ENCODE measurements at regions of chr22 and their contacts with region 1.

Region 1: GRCh38 chr22:43273902-43274484 is 69.2 kb downstream of the SCUBE1 start:
- DNase-seq: peak in 4 of 5 donors; percentile 29 to 47 (median 43)
- H3K4me3 ChIP-seq: no peak overlapping the region
- H3K4me3 Mint-ChIP-seq: no peak overlapping the region
- H3K27ac ChIP-seq: no peak overlapping the region
- H3K27ac Mint-ChIP-seq: no peak overlapping the region
- H3K4me1 ChIP-seq: peaks cover 4% of the 10 kb centered on the region
- H3K4me1 Mint-ChIP-seq: peaks cover 0 to 5% (median 4%) of the 10 kb centered on the region in 4 donors
- H3K27me3 ChIP-seq: no peaks in the 10 kb centered on the region
- H3K27me3 Mint-ChIP-seq: peaks cover 1 to 9% of the 10 kb centered on the region in 2 donors

Region 2: GRCh38 chr22:43151251-43152002 is 122.6 kb before region 1 on chr22 and contains the start of gene TSPO:
- CTCF ChIA-PET with region 1: no interaction called
- POLR2A ChIA-PET with region 1: no interaction called
- intact Hi-C with region 1: no loop called
- DNase-seq: peak; percentile 41 to 53 (median 45)
- H3K4me3 ChIP-seq: peak within 1 kb of the TSS; percentile 61 to 88
- H3K4me3 Mint-ChIP-seq: peak within 1 kb of the TSS; percentile 87 to 97 (median 90)
- H3K27ac ChIP-seq: peak within 1 kb of the TSS; percentile 68
- H3K27ac Mint-ChIP-seq: peak within 1 kb of the TSS; percentile 83 to 95 (median 92)
- H3K4me1 ChIP-seq: peaks cover 18% of the 10 kb centered on the region
- H3K4me1 Mint-ChIP-seq: peaks cover 7 to 25% (median 15%) of the 10 kb centered on the region in 4 donors
- H3K27me3 ChIP-seq: no peaks in the 10 kb centered on the region
- H3K27me3 Mint-ChIP-seq: no peaks in the 10 kb centered on the region
- total RNA-seq, gene TSPO: 66.9 to 71.0 TPM

Region 3: DNA sequence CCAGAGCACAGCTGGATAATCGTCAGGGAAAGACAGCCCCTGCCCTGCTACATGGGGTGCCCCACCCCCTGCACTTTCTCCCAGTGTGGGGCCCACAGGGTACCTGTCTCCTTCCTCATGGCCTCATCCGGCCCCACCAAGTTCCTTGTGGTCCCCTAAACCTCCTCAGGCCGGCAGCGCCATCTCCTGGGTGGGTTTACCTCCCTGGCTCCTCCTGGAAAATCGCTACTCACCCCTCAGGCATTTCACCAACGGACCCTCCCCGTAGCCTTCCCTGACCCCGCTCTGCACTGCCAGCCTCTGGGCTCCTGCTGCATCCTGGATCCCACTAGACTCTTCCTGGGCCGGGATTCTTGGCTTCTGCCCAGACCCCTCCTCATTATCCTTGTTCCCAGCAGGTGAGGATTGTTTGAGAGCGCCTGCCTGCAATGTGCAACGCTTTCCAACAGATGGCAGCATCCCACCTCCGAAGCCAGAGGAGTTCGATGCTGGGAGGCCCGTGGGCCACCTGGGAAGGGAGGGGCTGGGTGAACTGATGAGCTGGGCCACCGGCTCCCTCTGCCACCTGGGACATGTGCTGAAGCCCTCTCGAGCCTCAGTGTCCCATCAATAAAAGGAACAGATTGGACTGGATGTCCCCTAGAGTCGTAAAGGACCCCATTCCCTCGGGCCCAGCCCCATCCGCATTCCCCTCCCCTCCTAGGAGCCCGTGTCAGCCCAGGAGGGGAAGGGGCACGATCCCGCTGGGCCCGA is 42.8 kb before region 1 on chr22:
- CTCF ChIA-PET with region 1: interaction called, 17 read pairs
- POLR2A ChIA-PET with region 1: no interaction called
- intact Hi-C with region 1: no loop called
- DNase-seq: peak; percentile 50 to 59 (median 55)
- H3K4me3 ChIP-seq: no peak overlapping the region
- H3K4me3 Mint-ChIP-seq: no peak overlapping the region
- H3K27ac ChIP-seq: no peak overlapping the region
- H3K27ac Mint-ChIP-seq: peak overlapping the region in 1 of 7 donors; percentile 47
- H3K4me1 ChIP-seq: no peaks in the 10 kb centered on the region
- H3K4me1 Mint-ChIP-seq: peaks cover 2 to 5% (median 4%) of the 10 kb centered on the region in 4 donors
- H3K27me3 ChIP-seq: no peaks in the 10 kb centered on the region
- H3K27me3 Mint-ChIP-seq: peaks cover 3 to 6% of the 10 kb centered on the region in 2 donors

Region 4: GRCh38 chr22:43263645-43264514 is 10.1 kb before region 1 on chr22:
- CTCF ChIA-PET with region 1: interaction called, 20 read pairs
- POLR2A ChIA-PET with region 1: interaction called, 4 read pairs
- intact Hi-C with region 1: no loop called
- DNase-seq: peak; percentile 73 to 96 (median 77)
- H3K4me3 ChIP-seq: peak overlapping the region; percentile 5 to 50
- H3K4me3 Mint-ChIP-seq: peak overlapping the region; percentile 72 to 90 (median 85)
- H3K27ac ChIP-seq: peak overlapping the region; percentile 65
- H3K27ac Mint-ChIP-seq: peak overlapping the region; percentile 90 to 97 (median 94)
- H3K4me1 ChIP-seq: peaks cover 27% of the 10 kb centered on the region
- H3K4me1 Mint-ChIP-seq: peaks cover 20 to 38% (median 28%) of the 10 kb centered on the region in 4 donors
- H3K27me3 ChIP-seq: no peaks in the 10 kb centered on the region
- H3K27me3 Mint-ChIP-seq: no peaks in the 10 kb centered on the region

Region 5: DNA sequence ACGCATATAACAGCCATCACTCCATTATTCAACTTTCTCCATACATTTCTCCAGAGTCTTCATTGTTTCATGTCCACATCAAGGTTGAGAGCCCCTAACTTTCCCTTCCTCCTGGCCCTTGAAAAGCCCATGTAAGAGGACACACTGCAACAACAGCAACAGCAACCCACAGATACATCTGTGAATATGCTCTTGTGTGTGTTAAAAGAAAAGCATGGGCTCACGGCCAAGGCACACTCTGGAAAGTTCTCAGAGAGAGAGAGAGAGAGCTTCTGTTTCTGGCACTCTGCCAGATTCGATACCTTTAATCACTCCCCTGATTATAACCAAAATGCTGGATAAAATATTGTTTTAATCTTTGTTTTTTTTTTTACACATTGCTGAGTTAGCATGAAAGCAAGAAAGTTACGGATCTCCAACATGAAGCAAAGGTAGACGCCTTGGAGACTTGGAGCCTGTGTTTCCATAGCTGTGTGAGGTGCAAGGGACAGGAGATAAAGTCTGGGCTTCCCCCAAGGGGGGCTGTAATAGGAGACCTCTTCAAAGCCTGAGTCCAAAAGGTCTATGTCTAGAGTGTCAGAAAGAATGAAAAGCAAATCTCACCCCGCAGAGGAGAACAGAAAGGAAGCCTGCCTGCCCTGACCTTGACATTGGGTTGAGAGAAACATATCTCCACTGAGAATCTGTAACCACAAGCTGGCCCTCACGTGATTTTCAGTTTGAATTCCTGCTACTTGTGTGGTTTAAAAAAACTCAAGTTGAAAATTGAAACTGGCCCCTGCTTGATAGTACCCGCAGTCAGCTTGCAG is 104.1 kb after region 1 on chr22:
- CTCF ChIA-PET with region 1: interaction called, 13 read pairs
- POLR2A ChIA-PET with region 1: no interaction called
- intact Hi-C with region 1: no loop called
- DNase-seq: no peak
- H3K4me3 ChIP-seq: no peak overlapping the region
- H3K4me3 Mint-ChIP-seq: peak overlapping the region in 3 of 8 donors; percentile 26 to 48 (median 45)
- H3K27ac ChIP-seq: no peak overlapping the region
- H3K27ac Mint-ChIP-seq: peak overlapping the region in 4 of 7 donors; percentile 4 to 47 (median 17)
- H3K4me1 ChIP-seq: peaks cover 27% of the 10 kb centered on the region
- H3K4me1 Mint-ChIP-seq: peaks cover 12 to 36% (median 27%) of the 10 kb centered on the region in 4 donors
- H3K27me3 ChIP-seq: peaks cover 9% of the 10 kb centered on the region
- H3K27me3 Mint-ChIP-seq: peaks cover 16 to 27% of the 10 kb centered on the region in 2 donors

Region 6: GRCh38 chr22:43385770-43386641 is 112.0 kb after region 1 on chr22:
- CTCF ChIA-PET with region 1: interaction called, 18 read pairs
- POLR2A ChIA-PET with region 1: no interaction called
- intact Hi-C with region 1: loop called (anchors 1 kb)
- DNase-seq: peak; percentile 53 to 72 (median 66)
- H3K4me3 ChIP-seq: no peak overlapping the region
- H3K4me3 Mint-ChIP-seq: peak overlapping the region in 4 of 8 donors; percentile 16 to 57 (median 34)
- H3K27ac ChIP-seq: no peak overlapping the region
- H3K27ac Mint-ChIP-seq: no peak overlapping the region
- H3K4me1 ChIP-seq: peaks cover 9% of the 10 kb centered on the region
- H3K4me1 Mint-ChIP-seq: peaks cover 6 to 16% (median 11%) of the 10 kb centered on the region in 4 donors
- H3K27me3 ChIP-seq: no peaks in the 10 kb centered on the region
- H3K27me3 Mint-ChIP-seq: peaks cover 4 to 9% of the 10 kb centered on the region in 2 donors

Region 7: GRCh38 chr22:43435851-43436811 is 162.1 kb after region 1 on chr22:
- CTCF ChIA-PET with region 1: no interaction called
- POLR2A ChIA-PET with region 1: no interaction called
- intact Hi-C with region 1: no loop called
- DNase-seq: no peak
- H3K4me3 ChIP-seq: no peak overlapping the region
- H3K4me3 Mint-ChIP-seq: no peak overlapping the region
- H3K27ac ChIP-seq: no peak overlapping the region
- H3K27ac Mint-ChIP-seq: no peak overlapping the region
- H3K4me1 ChIP-seq: no peaks in the 10 kb centered on the region
- H3K4me1 Mint-ChIP-seq: no peaks in the 10 kb centered on the region
- H3K27me3 ChIP-seq: no peaks in the 10 kb centered on the region
- H3K27me3 Mint-ChIP-seq: peaks cover 14 to 16% of the 10 kb centered on the region in 2 donors

Measured in CD4-positive, alpha-beta memory T cell (primary cell).